ENCODE measurements at regions of chr3 and their contacts with region 1.

Region 1: DNA sequence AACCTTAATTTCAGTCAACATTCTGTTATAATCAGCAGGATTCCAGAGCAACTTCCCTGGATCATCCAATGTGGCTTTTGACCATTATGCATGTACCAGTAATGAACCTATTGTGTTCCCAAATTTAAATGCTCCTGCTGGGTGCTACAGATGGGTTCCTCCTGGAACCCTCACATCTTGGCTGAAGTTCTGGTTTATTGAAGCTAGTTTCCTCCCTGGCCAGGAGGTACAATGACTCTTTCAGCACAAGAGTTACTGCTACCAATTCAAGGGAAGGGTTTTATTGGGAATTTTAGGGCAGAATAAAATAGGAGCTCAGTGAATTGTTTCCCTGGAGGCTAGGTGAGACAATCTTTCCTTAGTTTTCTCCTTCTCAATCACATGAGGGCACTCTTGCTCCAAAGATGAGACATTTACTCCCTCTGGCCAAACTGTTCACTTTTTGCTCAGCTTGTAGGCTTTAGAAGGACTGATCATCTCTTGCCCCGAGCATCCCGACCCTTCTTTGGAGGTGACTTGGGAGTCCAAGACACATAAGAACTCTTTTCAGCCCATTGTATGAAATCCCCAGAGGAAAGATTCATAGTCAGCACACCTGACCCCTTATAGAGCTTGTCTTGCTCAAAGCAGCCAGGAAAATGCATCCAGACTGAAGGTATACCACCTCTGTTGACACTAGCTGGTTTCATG is 8.8 kb upstream of the NPHP3 start:
- DNase-seq: peak in 1 of 3 donors; percentile 19
- ATAC-seq: peak; percentile 83 to 88
- H3K4me3 ChIP-seq: no peak overlapping the region
- H3K27ac ChIP-seq: no peak overlapping the region
- H3K4me1 ChIP-seq: peaks cover 3% of the 10 kb centered on the region
- H3K27me3 ChIP-seq: no peaks in the 10 kb centered on the region

Region 2: GRCh38 chr3:132659365-132660051 is 71.5 kb before region 1 on chr3 and contains the start of gene ACAD11:
- intact Hi-C with region 1: no loop called
- DNase-seq: peak; percentile 83 to 92 (median 90)
- ATAC-seq: peak; percentile 91
- H3K4me3 ChIP-seq: peak within 1 kb of the TSS; percentile 76
- H3K27ac ChIP-seq: peak within 1 kb of the TSS; percentile 89
- H3K4me1 ChIP-seq: peaks cover 4% of the 10 kb centered on the region
- H3K27me3 ChIP-seq: no peaks in the 10 kb centered on the region
- total RNA-seq, gene ACAD11: 15.0 to 19.8 (median 18.1) TPM

Region 3: GRCh38 chr3:133040696-133041523 is 309.9 kb after region 1 on chr3:
- intact Hi-C with region 1: loop called (anchors 5 to 10 kb)
- DNase-seq: peak; percentile 78 to 85 (median 80)
- ATAC-seq: peak; percentile 77 to 82
- H3K4me3 ChIP-seq: no peak overlapping the region
- H3K27ac ChIP-seq: no peak overlapping the region
- H3K4me1 ChIP-seq: no peaks in the 10 kb centered on the region
- H3K27me3 ChIP-seq: no peaks in the 10 kb centered on the region

Region 4: DNA sequence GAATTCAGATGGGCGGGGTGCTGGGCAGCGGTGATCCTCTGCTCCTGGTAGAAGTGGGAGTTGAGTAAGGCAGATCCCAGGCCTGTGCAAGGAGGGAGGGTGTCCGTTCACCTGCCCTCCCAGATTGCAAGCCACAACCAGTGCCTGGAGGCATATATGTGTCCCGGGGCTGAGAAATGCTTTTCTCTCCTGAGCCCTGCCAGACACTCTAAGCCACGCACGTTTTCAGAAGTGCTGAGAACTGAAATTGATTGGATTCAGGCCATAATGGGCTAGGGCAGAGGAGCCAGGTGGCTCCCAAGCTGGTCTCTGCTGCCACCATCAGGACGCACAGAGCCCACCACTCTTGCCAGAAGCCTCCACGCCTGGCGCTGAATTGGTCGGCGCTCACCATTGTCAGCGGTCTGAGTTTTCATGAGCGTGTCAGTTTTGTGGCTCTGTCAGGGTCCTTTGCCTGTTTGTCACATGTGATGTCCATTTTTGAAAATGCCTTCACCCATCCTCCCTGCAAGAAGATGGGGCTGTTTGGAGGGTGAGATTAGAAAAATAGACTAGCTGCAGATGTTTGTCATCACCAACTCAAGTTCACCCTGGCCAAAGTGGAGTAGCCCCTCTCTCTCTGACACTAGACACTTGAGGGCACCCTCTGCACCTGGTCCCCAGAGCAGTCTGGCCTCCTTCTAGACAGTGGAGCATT is 653.4 kb after region 1 on chr3:
- intact Hi-C with region 1: loop called in 3 of 4 experiments (anchors 5 to 10 kb)
- DNase-seq: peak; percentile 70 to 86 (median 85)
- ATAC-seq: peak; percentile 87 to 90
- H3K4me3 ChIP-seq: no peak overlapping the region
- H3K27ac ChIP-seq: no peak overlapping the region
- H3K4me1 ChIP-seq: no peaks in the 10 kb centered on the region
- H3K27me3 ChIP-seq: no peaks in the 10 kb centered on the region

Region 5: DNA sequence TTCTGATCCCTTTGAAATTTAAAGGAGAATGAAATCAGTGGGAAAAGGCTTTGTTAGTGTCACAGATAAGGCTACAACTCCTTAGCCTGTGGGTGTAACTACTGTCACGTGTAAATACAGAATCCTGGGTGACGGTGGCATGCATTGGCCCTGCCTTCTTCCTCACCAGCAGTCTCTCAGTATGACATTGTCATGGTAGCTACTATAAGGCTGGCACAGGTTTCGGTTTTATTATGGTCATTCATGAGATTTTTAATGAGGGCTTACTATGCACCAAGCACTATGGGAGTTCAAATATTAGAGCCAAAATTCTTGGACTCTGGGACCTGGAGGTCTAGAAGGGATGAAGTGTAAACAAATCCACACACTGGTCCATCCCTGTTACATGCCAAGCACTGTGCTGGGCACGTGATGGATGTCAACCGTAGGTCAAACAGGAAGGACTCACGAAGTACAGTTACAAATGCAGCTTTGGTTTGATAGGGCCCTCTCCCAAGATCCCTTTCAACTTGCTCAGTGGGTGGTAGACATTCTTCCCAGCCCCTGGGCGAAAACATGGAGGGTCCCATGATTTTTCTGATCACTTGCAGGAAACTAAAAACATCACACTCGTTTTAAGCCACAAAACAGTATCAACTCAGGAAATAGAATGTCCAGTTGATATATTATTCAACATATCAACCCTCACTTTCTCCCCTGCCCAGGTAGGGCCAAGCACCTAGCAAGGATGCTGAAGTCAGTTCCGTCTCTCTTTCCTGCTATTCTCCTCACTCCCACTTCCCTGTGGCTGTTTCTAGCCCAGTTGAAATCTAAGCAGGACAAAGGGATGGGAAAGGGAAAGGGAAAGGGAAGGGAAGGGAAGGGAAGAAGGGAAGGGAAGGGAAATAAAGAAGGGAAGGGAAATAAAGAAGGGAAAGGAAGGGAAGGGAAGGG is 694.2 kb after region 1 on chr3:
- intact Hi-C with region 1: loop called (anchors 2 to 5 kb)
- DNase-seq: no peak
- ATAC-seq: no peak
- H3K4me3 ChIP-seq: no peak overlapping the region
- H3K27ac ChIP-seq: no peak overlapping the region
- H3K4me1 ChIP-seq: peaks cover 3% of the 10 kb centered on the region
- H3K27me3 ChIP-seq: no peaks in the 10 kb centered on the region